ENCODE measurements at regions of chr14 and their contacts with region 1.

Region 1: GRCh38 chr14:100078991-100079725 is 13.9 kb downstream of the EVL start:
- DNase-seq: peak; percentile 93
- ATAC-seq: peak; percentile 70
- H3K4me3 Mint-ChIP-seq: peak overlapping the region; percentile 72
- H3K27ac Mint-ChIP-seq: peak overlapping the region; percentile 99
- H3K4me1 Mint-ChIP-seq: peaks cover 95% of the 10 kb centered on the region
- H3K27me3 Mint-ChIP-seq: no peaks in the 10 kb centered on the region
- CTCF ChIP-seq: peak; percentile 27

Region 2: DNA sequence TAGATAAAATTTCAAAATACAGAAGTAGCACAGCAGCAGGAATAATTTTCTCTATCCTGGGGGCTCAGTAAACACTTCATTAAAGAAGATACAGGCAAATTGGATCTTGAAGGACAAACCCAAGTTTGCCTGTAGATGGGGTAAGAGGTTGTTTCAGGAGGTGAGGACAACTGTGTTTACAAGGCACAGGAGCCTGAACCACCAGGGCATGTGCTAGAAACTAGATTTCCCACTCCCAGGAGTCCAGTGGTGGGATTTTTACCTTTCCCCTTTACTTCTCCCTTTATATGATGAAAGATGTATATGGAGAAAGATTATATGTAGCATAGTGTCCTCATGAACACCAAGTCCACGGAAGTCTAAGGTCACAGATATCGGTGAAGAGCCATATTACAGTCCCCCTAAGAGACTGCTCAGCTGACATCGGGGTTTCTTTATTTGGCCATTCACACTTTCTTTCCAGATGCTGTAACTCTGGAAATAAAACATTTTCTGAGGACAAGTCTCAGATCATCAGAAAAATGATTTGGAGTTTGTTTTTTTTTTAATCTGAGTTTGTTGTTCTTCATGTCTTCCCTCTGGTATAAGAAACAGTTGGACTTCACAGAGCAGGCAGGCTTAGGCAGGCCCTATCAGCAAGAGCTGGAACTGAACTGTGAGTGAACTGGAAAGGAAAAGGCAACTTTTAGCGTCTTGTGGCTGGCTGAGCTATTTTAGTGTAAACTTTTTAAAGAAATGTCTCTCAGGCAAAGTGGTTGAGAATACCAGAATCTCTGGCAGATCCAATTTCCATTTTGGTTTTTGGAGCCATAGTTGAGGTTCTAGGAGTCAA is 22.0 kb before region 1 on chr14:
- CTCF ChIA-PET with region 1: interaction called, 15 read pairs
- POLR2A ChIA-PET with region 1: interaction called, 521 read pairs
- intact Hi-C with region 1: no loop called
- DNase-seq: peak; percentile 31
- ATAC-seq: peak; percentile 35
- H3K4me3 Mint-ChIP-seq: peak overlapping the region; percentile 43
- H3K27ac Mint-ChIP-seq: peak overlapping the region; percentile 87
- H3K4me1 Mint-ChIP-seq: peaks cover 61% of the 10 kb centered on the region
- H3K27me3 Mint-ChIP-seq: no peaks in the 10 kb centered on the region
- CTCF ChIP-seq: peak; percentile 65

Region 3: DNA sequence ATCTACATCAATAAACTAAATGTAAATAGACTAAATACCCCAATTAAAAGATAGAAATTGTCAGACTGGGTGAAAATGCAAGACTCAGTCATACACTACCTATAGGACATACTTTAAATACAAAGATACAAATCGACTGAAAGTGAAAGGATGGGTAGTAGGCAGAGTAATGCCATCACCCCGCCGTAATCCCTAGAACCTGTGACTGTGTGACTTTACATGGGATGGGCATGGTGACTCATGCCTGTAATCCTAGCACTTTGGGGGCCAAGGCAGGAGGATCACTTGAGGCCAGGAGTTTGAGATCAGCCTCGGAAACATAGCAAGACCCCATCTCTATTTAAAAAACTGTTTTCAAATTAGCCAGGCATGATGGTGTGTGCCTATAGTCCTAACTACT is 16.6 kb before region 1 on chr14:
- CTCF ChIA-PET with region 1: interaction called, 170 read pairs
- POLR2A ChIA-PET with region 1: interaction called, 521 read pairs
- intact Hi-C with region 1: loop called (anchors 2 kb)
- DNase-seq: peak; percentile 75
- ATAC-seq: peak; percentile 24
- H3K4me3 Mint-ChIP-seq: peak overlapping the region; percentile 17
- H3K27ac Mint-ChIP-seq: peak overlapping the region; percentile 99
- H3K4me1 Mint-ChIP-seq: peaks cover 63% of the 10 kb centered on the region
- H3K27me3 Mint-ChIP-seq: no peaks in the 10 kb centered on the region
- CTCF ChIP-seq: no peak